Aorta (tissue), 5 donors: ENCODE measurements at regions of chr11 and their contacts with region 1.

Region 1: GRCh38 chr11:39461066-39461465 is 1998.4 kb downstream of the LRRC4C start:
- DNase-seq: no peak
- ATAC-seq: no peak
- H3K4me3 ChIP-seq: no peak overlapping the region
- H3K27ac ChIP-seq: no peak overlapping the region
- H3K4me1 ChIP-seq: no peaks in the 10 kb centered on the region
- H3K27me3 ChIP-seq: no peaks in the 10 kb centered on the region

Region 2: GRCh38 chr11:38553148-38553547 is 907.9 kb before region 1 on chr11:
- intact Hi-C with region 1: no loop called
- DNase-seq: no peak
- ATAC-seq: no peak
- H3K4me3 ChIP-seq: no peak overlapping the region
- H3K27ac ChIP-seq: no peak overlapping the region
- H3K4me1 ChIP-seq: no peaks in the 10 kb centered on the region
- H3K27me3 ChIP-seq: no peaks in the 10 kb centered on the region

Region 3: GRCh38 chr11:40689823-40690222 is 1228.8 kb after region 1 on chr11:
- intact Hi-C with region 1: loop called in 1 of 2 experiments (anchors 10 kb)
- DNase-seq: no peak
- ATAC-seq: no peak
- H3K4me3 ChIP-seq: no peak overlapping the region
- H3K27ac ChIP-seq: no peak overlapping the region
- H3K4me1 ChIP-seq: no peaks in the 10 kb centered on the region
- H3K27me3 ChIP-seq: no peaks in the 10 kb centered on the region

Region 4: DNA sequence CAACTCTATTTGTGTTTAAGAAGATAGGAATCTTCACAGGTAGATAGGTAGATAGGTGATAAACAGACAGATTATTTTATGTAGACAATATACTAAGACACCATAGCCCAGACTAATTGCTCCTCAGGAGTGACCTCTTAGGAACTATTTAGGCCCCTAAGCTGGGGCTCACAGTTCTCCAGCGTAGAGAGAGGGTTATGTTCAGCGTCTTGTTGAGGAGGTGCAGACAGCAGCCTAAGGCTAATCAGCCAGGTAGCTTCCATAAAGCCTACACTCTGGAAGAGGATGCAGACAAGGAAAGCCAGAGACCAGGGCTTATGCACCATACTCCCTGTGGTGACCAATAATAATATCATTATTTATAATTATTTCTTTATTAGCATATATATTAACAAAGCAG is 1293.2 kb after region 1 on chr11:
- intact Hi-C with region 1: loop called in 1 of 2 experiments (anchors 5 kb)
- DNase-seq: no peak
- ATAC-seq: no peak
- H3K4me3 ChIP-seq: no peak overlapping the region
- H3K27ac ChIP-seq: no peak overlapping the region
- H3K4me1 ChIP-seq: no peaks in the 10 kb centered on the region
- H3K27me3 ChIP-seq: no peaks in the 10 kb centered on the region